HepG2 (cell line): ENCODE measurements at regions of chr15 and their contacts with region 1.

Region 1: GRCh38 chr15:35725353-35725752 is 179.4 kb upstream of the DPH6 start:
- DNase-seq: no peak
- ATAC-seq: no peak
- H3K4me3 ChIP-seq: no peak overlapping the region
- H3K27ac ChIP-seq: no peak overlapping the region
- H3K4me1 ChIP-seq: no peaks in the 10 kb centered on the region
- H3K27me3 ChIP-seq: no peaks in the 10 kb centered on the region; a peak in 1 of 5 replicates
- CTCF ChIP-seq: no peak
- EP300 ChIP-seq: no peak
- POLR2A ChIP-seq: no peak
- RAD21 ChIP-seq: no peak

Region 2: DNA sequence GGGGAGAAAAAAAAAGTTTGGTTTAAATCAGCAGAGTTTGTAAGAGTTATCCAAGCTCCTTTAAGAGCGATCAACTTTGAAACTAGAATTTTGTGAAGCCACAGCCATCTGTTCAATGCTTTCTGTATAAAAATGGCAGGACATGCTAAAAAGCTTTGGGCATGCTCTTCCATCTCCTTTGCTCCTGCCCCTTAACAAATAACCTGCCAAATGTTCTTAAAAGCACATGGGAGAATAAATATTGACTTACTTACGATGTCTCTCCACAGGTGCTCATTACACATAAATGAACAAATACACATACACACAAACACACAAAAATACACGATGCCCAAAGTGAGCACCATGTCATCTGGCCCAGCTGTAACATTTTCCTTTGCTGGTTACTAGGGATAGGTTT is 32.4 kb after region 1 on chr15:
- CTCF ChIA-PET with region 1: no interaction called
- POLR2A ChIA-PET with region 1: no interaction called
- in situ Hi-C with region 1: no loop called
- intact Hi-C with region 1: loop called (anchors 1 kb)
- DNase-seq: no peak
- ATAC-seq: no peak
- H3K4me3 ChIP-seq: no peak overlapping the region
- H3K27ac ChIP-seq: no peak overlapping the region
- H3K4me1 ChIP-seq: no peaks in the 10 kb centered on the region
- H3K27me3 ChIP-seq: no peaks in the 10 kb centered on the region
- CTCF ChIP-seq: no peak
- EP300 ChIP-seq: no peak
- POLR2A ChIP-seq: no peak
- RAD21 ChIP-seq: no peak

Region 3: DNA sequence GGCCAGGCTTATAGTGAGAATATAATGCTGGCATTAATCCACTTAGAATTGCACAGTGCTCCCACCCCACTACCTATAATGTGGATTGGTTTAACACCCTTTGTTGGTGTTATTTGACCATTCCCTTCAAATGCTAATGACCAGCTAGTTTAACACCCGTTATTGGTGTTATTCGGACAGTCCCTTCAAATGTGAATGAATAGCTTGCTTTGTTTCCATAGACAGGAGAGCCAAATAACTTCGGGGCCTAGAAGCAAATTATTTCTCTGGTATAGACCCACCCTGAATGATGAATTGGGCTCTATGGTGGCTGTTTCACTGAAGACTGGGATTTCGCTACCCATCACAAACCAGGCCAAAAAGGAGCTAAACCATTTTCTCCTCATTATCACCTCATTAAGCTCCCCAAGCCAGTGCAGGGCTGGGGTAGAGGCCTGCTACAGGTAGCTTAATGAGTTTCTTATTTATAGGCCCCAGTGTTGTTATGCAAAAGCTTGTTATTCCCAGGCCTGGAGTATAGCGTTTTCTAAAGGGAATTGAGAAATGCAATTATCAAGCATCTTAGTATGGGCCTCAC is 314.7 kb after region 1 on chr15:
- CTCF ChIA-PET with region 1: no interaction called
- POLR2A ChIA-PET with region 1: no interaction called
- in situ Hi-C with region 1: no loop called
- intact Hi-C with region 1: no loop called
- DNase-seq: no peak
- ATAC-seq: no peak
- H3K4me3 ChIP-seq: no peak overlapping the region
- H3K27ac ChIP-seq: no peak overlapping the region
- H3K4me1 ChIP-seq: no peaks in the 10 kb centered on the region
- H3K27me3 ChIP-seq: peaks cover 1 to 3% of the 10 kb centered on the region in 2 experiments; a peak in 3 of 5 replicates
- CTCF ChIP-seq: no peak
- EP300 ChIP-seq: no peak
- POLR2A ChIP-seq: no peak
- RAD21 ChIP-seq: no peak